ENCODE measurements at regions of chr7 and their contacts with region 1.

Region 1: GRCh38 chr7:87600130-87601124 is at the start of gene ABCB1:
- DNase-seq: peak; percentile 37
- ATAC-seq: peak; percentile 73
- H3K4me3 Mint-ChIP-seq: peak within 1 kb of the TSS; percentile 89
- H3K27ac Mint-ChIP-seq: peak within 1 kb of the TSS; percentile 76
- H3K4me1 Mint-ChIP-seq: peaks cover 22% of the 10 kb centered on the region
- H3K27me3 Mint-ChIP-seq: peaks cover 33% of the 10 kb centered on the region
- CTCF ChIP-seq: no peak
- total RNA-seq, gene ABCB1: 4.1 and 4.7 TPM in 2 replicates

Region 2: DNA sequence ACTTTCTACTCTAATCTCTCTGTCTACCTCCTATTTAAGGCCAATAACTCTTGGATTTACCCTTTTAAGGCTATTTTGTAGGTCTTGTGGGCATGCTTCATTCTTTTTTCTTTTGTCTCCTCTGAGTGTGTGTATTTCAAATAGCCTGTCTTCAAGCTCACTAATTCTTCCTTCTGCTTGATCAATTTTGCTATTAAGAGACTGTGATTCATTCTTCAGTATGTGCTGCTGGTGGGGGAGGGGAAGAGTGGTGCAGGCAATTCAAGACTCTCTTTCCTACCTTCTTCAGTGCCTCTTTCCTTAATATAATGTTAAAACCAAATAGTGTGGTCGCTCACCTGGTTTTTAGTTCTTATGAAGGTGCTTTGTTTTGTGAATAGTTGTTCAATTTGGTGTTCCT is 19.8 kb before region 1 on chr7:
- CTCF ChIA-PET with region 1: no interaction called
- POLR2A ChIA-PET with region 1: no interaction called
- intact Hi-C with region 1: loop called (anchors 2 kb)
- DNase-seq: no peak
- ATAC-seq: no peak
- H3K4me3 Mint-ChIP-seq: no peak overlapping the region
- H3K27ac Mint-ChIP-seq: no peak overlapping the region
- H3K4me1 Mint-ChIP-seq: no peaks in the 10 kb centered on the region
- H3K27me3 Mint-ChIP-seq: no peaks in the 10 kb centered on the region
- CTCF ChIP-seq: no peak

Measured in activated B cell treated with CpG ODN at 0.5 μM for 24 hours (primary cell).